Activated CD4-positive, alpha-beta memory T cell treated with anti-CD3 and anti-CD28 coated beads, Interleukin-2, amount 10 ng/mL, durations not matched to agents 7 days and 5 days (primary cell): ENCODE measurements at regions of chr19 and their contacts with region 1.

Region 1: GRCh38 chr19:14383661-14384555 is 2.7 kb downstream of the ADGRE5 start:
- DNase-seq: peak; percentile 63
- H3K4me3 Mint-ChIP-seq: peak overlapping the region; percentile 92
- H3K27ac Mint-ChIP-seq: peak overlapping the region; percentile 90
- H3K4me1 Mint-ChIP-seq: peaks cover 38% of the 10 kb centered on the region
- H3K27me3 Mint-ChIP-seq: no peaks in the 10 kb centered on the region

Region 2: DNA sequence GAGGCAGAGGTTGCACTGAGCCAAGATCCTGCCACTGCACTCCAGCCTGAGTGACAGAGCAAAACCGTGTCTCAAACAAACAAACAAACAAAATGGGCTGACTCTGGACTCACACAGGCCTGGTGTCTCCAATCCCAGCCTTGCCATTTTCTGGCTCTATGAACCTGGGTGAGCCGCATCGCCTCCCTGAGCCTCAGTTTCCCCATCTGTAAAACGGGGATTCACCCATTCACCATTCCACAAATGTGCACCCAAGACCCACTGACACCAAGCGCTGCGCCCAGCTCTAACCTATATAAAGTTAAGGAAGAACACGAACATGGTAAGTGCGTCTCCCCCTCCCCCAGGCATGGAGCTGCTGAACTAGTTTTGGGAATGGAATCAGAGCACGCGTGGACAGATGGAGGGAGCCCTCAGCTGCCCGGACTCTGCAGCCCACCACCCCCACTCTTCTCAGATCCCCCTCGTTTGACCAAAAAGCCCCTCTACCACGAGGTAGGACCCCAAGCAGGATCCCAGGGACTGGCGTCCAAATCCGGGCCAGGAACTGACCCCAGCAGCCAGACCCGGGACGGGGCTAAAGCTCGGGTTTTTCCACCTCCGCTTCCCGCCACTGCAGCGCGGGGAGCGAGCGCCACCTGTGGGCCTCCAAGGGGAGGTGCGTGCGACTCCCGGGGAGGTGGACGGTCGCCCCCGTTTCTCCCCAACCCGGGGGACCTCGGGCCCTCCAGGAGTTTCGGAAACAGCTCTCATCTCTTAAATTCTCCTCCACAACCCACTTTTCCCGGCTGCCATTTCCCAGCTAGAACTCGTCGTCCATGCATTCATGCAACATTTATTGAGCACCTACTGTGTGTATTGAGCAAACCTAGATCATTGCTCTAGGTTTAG is 35.7 kb before region 1 on chr19:
- CTCF ChIA-PET with region 1: interaction called, 19 read pairs
- POLR2A ChIA-PET with region 1: interaction called, 78 read pairs
- DNase-seq: peak; percentile 74
- H3K4me3 Mint-ChIP-seq: peak overlapping the region; percentile 32
- H3K27ac Mint-ChIP-seq: peak overlapping the region; percentile 24
- H3K4me1 Mint-ChIP-seq: peaks cover 24% of the 10 kb centered on the region
- H3K27me3 Mint-ChIP-seq: no peaks in the 10 kb centered on the region

Region 3: GRCh38 chr19:14366498-14366915 is 17.4 kb before region 1 on chr19:
- CTCF ChIA-PET with region 1: interaction called, 35 read pairs
- POLR2A ChIA-PET with region 1: interaction called, 308 read pairs
- DNase-seq: peak; percentile 90
- H3K4me3 Mint-ChIP-seq: peak overlapping the region; percentile 61
- H3K27ac Mint-ChIP-seq: peak overlapping the region; percentile 89
- H3K4me1 Mint-ChIP-seq: peaks cover 73% of the 10 kb centered on the region
- H3K27me3 Mint-ChIP-seq: no peaks in the 10 kb centered on the region

Region 4: DNA sequence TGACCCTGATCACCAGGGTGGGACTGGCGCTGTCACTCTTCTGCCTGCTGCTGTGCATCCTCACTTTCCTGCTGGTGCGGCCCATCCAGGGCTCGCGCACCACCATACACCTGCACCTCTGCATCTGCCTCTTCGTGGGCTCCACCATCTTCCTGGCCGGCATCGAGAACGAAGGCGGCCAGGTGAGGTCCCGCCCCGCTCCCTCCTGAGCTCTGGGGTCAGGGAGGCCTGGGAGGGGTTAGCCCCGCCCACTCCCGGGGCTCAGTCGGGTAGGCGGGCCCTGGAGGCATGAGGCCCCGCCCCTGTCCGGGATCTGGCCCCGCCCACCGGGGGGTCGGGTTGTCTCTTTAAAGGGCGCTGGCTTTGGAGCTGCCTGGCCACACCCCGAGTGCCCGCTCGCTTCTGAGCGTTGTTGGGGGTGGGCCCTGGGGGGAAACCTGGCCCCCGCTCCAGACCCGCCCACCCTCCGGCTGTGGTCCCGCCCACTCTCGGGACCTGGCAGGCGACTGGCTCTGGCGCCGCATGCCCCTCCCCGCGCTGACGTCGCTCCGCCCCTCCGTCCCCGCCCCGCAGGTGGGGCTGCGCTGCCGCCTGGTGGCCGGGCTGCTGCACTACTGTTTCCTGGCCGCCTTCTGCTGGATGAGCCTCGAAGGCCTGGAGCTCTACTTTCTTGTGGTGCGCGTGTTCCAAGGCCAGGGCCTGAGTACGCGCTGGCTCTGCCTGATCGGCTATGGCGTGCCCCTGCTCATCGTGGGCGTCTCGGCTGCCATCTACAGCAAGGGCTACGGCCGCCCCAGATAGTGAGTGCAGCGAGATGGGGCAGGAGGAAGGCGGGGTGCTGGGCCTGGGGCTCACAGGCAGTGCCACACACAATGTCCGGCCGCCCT is 22.1 kb after region 1 on chr19:
- CTCF ChIA-PET with region 1: interaction called, 6 read pairs
- POLR2A ChIA-PET with region 1: interaction called, 218 read pairs
- DNase-seq: peak; percentile 92
- H3K4me3 Mint-ChIP-seq: no peak overlapping the region
- H3K27ac Mint-ChIP-seq: peak overlapping the region; percentile 68
- H3K4me1 Mint-ChIP-seq: peaks cover 45% of the 10 kb centered on the region
- H3K27me3 Mint-ChIP-seq: no peaks in the 10 kb centered on the region

Region 5: DNA sequence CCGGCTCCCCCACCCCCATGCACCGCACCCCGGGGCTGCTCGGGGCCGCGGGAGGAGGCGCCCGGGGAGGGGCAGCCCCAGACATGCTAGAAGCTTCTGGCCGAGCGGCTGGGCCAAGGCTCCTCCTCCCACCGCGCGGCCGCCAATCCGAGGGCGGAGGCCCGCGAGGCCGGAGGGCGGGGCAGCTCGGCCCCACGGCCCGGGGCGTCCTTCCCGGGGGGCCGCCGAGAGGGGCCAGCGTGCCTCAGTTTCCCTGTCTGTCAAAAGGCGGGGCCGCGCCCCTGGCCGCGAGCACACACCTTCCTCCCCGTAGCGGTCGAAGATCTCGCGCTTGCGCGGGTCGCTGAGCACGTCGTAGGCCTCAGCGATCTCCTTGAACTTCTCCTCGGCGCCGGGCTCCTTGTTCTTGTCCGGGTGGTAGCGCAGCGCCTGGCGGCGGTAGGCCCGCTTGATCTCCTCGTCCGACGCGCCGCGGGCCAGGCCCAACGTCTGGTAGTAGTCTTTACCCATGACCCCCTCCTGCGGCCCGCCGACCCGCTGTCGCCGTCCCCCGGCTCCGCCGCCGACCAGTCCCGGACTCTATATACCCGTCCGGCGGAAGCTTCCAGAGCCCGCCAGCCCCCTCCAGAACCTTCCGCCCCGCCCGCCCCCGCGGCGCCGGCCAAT is 134.1 kb after region 1 on chr19 and contains the start of gene DNAJB1:
- CTCF ChIA-PET with region 1: no interaction called
- POLR2A ChIA-PET with region 1: interaction called, 13 read pairs
- DNase-seq: peak; percentile 79
- H3K4me3 Mint-ChIP-seq: peak within 1 kb of the TSS; percentile 79
- H3K27ac Mint-ChIP-seq: peak within 1 kb of the TSS; percentile 93
- H3K4me1 Mint-ChIP-seq: peaks cover 64% of the 10 kb centered on the region
- H3K27me3 Mint-ChIP-seq: no peaks in the 10 kb centered on the region
- total RNA-seq, gene DNAJB1: 108 to 114 TPM